ENCODE measurements at regions of chr12 and their contacts with region 1.

Region 1: GRCh38 chr12:57005980-57006808 is at the start of gene ZBTB39:
- DNase-seq: peak; percentile 52
- H3K4me3 Mint-ChIP-seq: peak within 1 kb of the TSS; percentile 84
- H3K27ac Mint-ChIP-seq: peak within 1 kb of the TSS; percentile 60
- H3K4me1 Mint-ChIP-seq: peaks cover 27% of the 10 kb centered on the region
- H3K27me3 Mint-ChIP-seq: no peaks in the 10 kb centered on the region
- CTCF ChIP-seq: peak; percentile 43
- total RNA-seq, gene ZBTB39: 5.2 and 6.2 TPM in 2 replicates

Region 2: GRCh38 chr12:56670836-56671235 is 335.4 kb before region 1 on chr12:
- CTCF ChIA-PET with region 1: no interaction called
- POLR2A ChIA-PET with region 1: no interaction called
- intact Hi-C with region 1: no loop called
- DNase-seq: no peak
- H3K4me3 Mint-ChIP-seq: no peak overlapping the region
- H3K27ac Mint-ChIP-seq: no peak overlapping the region
- H3K4me1 Mint-ChIP-seq: peaks cover 6% of the 10 kb centered on the region
- H3K27me3 Mint-ChIP-seq: no peaks in the 10 kb centered on the region
- CTCF ChIP-seq: no peak

Region 3: DNA sequence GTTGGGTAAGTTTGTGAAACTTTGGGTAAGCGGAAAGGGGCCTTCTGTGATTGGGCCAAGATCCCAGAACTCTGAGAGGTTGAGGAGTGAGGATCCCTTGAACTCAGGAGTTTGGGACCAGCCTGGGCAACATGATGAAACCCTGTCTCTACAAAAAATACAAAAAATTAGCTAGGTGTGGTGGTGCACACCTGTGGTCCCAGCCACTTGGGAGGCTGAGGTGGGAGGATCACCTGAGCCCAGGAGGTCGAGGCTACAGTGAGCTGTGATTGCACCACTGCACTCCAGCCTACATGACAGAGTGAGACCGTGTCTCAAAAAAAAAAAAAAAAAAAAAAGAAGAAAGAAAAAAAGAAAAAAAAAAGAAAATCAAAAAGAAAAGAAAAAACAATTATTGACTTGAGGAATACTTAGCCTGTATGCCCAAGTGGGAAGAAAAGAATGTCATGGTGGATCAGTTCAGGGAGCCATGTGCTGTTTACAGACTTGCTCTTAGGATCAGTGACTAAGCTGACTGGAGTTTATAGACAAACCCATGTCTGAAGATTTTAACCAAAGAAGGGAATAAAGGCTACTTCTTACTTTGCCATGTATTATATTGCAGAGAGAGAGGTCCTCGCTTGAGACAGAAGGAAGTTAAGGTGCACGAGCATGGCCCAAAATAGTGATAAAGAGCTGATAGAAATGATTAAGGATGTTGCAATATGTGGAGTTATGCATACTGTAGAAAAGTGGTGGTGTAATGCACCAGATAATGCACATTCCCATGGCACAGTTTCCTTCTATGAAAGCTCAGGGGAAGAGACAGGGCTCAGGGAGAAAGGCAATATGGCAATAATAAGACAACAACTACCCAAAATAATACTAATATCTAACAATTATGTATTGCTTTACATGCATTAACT is 242.2 kb before region 1 on chr12:
- CTCF ChIA-PET with region 1: interaction called, 119 read pairs
- POLR2A ChIA-PET with region 1: no interaction called
- intact Hi-C with region 1: no loop called
- DNase-seq: no peak
- H3K4me3 Mint-ChIP-seq: no peak overlapping the region
- H3K27ac Mint-ChIP-seq: no peak overlapping the region
- H3K4me1 Mint-ChIP-seq: peaks cover 23% of the 10 kb centered on the region
- H3K27me3 Mint-ChIP-seq: no peaks in the 10 kb centered on the region
- CTCF ChIP-seq: no peak

Region 4: DNA sequence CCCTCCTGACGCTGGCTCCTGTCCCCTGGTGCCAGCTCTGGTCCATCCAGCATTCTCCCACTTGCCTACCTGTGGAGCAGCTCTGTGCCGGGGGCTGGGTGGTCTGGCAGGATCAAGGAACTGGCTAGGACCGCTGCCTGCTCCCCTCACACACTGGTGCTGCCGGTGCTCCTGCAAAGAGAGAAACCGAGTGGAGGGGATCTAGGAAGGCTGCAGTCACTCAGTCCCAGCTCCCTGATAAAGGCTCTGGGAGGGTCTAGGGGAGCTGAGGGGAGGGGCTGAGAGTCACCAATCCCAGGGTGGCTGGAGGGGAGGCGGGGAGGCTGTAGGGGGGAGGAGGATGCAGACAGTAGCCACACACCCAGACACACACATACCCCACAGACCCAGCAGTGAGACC is 10.1 kb after region 1 on chr12 and contains the start of gene TAC3:
- CTCF ChIA-PET with region 1: interaction called, 12 read pairs
- POLR2A ChIA-PET with region 1: interaction called, 4 read pairs
- intact Hi-C with region 1: no loop called
- DNase-seq: no peak
- H3K4me3 Mint-ChIP-seq: no peak within 1 kb of the TSS
- H3K27ac Mint-ChIP-seq: no peak within 1 kb of the TSS
- H3K4me1 Mint-ChIP-seq: no peaks in the 10 kb centered on the region
- H3K27me3 Mint-ChIP-seq: peaks cover 40% of the 10 kb centered on the region
- CTCF ChIP-seq: no peak
- total RNA-seq, gene TAC3: not detected in 2 replicates

Region 5: GRCh38 chr12:57046947-57047890 is 41.0 kb after region 1 on chr12:
- CTCF ChIA-PET with region 1: interaction called, 10 read pairs
- POLR2A ChIA-PET with region 1: interaction called, 3 read pairs
- intact Hi-C with region 1: no loop called
- DNase-seq: no peak
- H3K4me3 Mint-ChIP-seq: no peak overlapping the region
- H3K27ac Mint-ChIP-seq: no peak overlapping the region
- H3K4me1 Mint-ChIP-seq: no peaks in the 10 kb centered on the region
- H3K27me3 Mint-ChIP-seq: peaks cover 28% of the 10 kb centered on the region
- CTCF ChIP-seq: no peak

Region 6: GRCh38 chr12:57182921-57183790 is 177.0 kb after region 1 on chr12:
- CTCF ChIA-PET with region 1: interaction called, 5 read pairs
- POLR2A ChIA-PET with region 1: no interaction called
- intact Hi-C with region 1: loop called (anchors 1 kb)
- DNase-seq: peak; percentile 82
- H3K4me3 Mint-ChIP-seq: no peak overlapping the region
- H3K27ac Mint-ChIP-seq: peak overlapping the region; percentile 33
- H3K4me1 Mint-ChIP-seq: peaks cover 10% of the 10 kb centered on the region
- H3K27me3 Mint-ChIP-seq: no peaks in the 10 kb centered on the region
- CTCF ChIP-seq: peak; percentile 89

Region 7: GRCh38 chr12:57487597-57488401 is 481.6 kb after region 1 on chr12 and contains the start of gene MARS1:
- CTCF ChIA-PET with region 1: no interaction called
- POLR2A ChIA-PET with region 1: no interaction called
- intact Hi-C with region 1: no loop called
- DNase-seq: peak; percentile 98
- H3K4me3 Mint-ChIP-seq: peak within 1 kb of the TSS; percentile 92
- H3K27ac Mint-ChIP-seq: peak within 1 kb of the TSS; percentile 87
- H3K4me1 Mint-ChIP-seq: peaks cover 20% of the 10 kb centered on the region
- H3K27me3 Mint-ChIP-seq: peaks cover 10% of the 10 kb centered on the region
- CTCF ChIP-seq: no peak
- total RNA-seq, gene MARS1: 714 and 762 TPM in 2 replicates